Activated naive CD4-positive, alpha-beta T cell treated with anti-CD3 and anti-CD28 coated beads, Interleukin-2, amount 10 ng/mL, durations not matched to agents 7 days and 5 days (primary cell): ENCODE measurements at regions of chr2 and their contacts with region 1.

Region 1: DNA sequence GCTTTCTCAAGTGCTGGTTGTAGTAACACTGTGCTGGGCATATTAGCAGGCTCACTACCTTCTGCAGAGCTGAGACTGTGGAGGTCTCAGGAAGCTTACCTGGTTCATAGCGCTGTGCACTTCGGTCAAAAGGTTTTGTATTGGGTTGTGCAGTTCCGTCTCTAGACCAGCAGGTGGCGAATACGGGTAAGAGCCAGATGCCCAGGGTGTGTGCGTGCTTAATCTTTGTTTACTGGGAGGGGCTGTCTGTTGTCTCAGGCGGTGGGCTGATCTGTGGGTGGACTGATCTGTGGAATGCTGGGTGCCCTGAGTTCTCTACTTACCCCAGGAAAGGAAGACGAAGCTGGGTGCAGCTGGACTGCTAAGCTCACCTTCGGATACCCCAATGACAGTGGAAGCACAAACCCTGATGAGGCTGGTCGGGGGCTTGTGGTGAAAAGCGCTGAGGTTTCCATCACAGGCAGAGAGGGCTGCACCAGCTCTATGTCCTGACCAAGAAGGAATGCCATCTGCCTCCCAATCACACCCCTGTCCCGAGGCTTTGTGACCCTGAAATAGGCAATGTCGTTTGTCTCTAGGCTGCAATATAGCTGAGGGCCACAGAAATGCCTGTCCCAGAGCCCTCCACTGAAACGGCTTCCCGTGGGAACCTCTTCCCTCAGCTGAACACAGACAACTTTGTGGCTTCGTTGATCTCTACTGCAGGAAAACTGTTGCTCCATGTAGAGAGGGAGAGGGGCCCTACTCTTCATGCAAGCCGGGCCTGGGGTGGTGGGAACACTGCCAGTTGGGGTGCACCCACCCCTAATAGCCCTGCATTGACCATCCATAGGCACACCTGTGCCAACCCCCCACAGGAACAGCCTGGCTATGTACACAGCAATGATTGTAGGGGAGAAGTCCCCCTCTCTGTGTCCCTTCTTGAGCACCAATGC is 45.9 kb upstream of the FAM117B start:
- DNase-seq: peak; percentile 77
- H3K4me3 Mint-ChIP-seq: no peak overlapping the region
- H3K27ac Mint-ChIP-seq: no peak overlapping the region
- H3K4me1 Mint-ChIP-seq: peaks cover 11% of the 10 kb centered on the region
- H3K27me3 Mint-ChIP-seq: peaks cover 3% of the 10 kb centered on the region

Region 2: GRCh38 chr2:202541137-202541536 is 47.8 kb before region 1 on chr2:
- CTCF ChIA-PET with region 1: no interaction called
- DNase-seq: no peak
- H3K4me3 Mint-ChIP-seq: no peak overlapping the region
- H3K27ac Mint-ChIP-seq: no peak overlapping the region
- H3K4me1 Mint-ChIP-seq: no peaks in the 10 kb centered on the region
- H3K27me3 Mint-ChIP-seq: no peaks in the 10 kb centered on the region

Region 3: GRCh38 chr2:202634556-202635427 is 45.9 kb after region 1 on chr2 and contains the start of gene FAM117B:
- CTCF ChIA-PET with region 1: interaction called, 27 read pairs
- DNase-seq: peak; percentile 99
- H3K4me3 Mint-ChIP-seq: peak within 1 kb of the TSS; percentile 91
- H3K27ac Mint-ChIP-seq: peak within 1 kb of the TSS; percentile 93
- H3K4me1 Mint-ChIP-seq: peaks cover 60% of the 10 kb centered on the region
- H3K27me3 Mint-ChIP-seq: peaks cover 4% of the 10 kb centered on the region

Region 4: DNA sequence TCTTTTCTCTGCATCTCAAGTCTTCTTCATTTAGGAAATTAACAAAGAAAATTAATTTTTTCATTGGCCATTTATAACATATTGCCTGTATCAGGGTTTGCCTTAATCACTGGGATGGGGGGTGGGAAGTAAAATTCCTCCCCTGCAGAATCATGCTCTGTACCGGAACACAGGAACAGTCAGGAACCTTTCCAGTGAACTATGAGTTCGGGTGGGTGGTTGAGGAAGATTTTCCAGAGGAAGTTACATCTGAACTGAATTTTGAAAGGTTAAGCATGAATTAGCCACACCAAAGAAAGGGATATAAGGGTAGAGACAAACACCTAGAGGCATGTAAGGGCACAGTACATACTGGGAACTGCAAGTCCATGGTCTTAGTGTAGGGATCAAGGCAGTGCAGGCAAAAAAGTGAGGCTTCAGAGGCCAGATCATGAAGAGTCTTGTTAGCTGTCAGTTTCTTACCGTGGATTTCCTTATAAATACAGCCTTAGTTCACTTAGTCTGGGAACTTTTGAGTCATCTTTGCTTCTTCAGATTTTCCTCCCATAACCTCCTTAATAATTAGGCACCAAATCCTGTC is 101.5 kb after region 1 on chr2:
- CTCF ChIA-PET with region 1: no interaction called
- DNase-seq: no peak
- H3K4me3 Mint-ChIP-seq: no peak overlapping the region
- H3K27ac Mint-ChIP-seq: no peak overlapping the region
- H3K4me1 Mint-ChIP-seq: peaks cover 19% of the 10 kb centered on the region
- H3K27me3 Mint-ChIP-seq: no peaks in the 10 kb centered on the region

Region 5: GRCh38 chr2:202870431-202871299 is 281.8 kb after region 1 on chr2:
- CTCF ChIA-PET with region 1: interaction called, 42 read pairs
- DNase-seq: peak; percentile 78
- H3K4me3 Mint-ChIP-seq: peak overlapping the region; percentile 86
- H3K27ac Mint-ChIP-seq: peak overlapping the region; percentile 82
- H3K4me1 Mint-ChIP-seq: peaks cover 14% of the 10 kb centered on the region
- H3K27me3 Mint-ChIP-seq: peaks cover 3% of the 10 kb centered on the region